Naive thymus-derived CD4-positive, alpha-beta T cell (primary cell): ENCODE measurements at regions of chr17 and their contacts with region 1.

Region 1: DNA sequence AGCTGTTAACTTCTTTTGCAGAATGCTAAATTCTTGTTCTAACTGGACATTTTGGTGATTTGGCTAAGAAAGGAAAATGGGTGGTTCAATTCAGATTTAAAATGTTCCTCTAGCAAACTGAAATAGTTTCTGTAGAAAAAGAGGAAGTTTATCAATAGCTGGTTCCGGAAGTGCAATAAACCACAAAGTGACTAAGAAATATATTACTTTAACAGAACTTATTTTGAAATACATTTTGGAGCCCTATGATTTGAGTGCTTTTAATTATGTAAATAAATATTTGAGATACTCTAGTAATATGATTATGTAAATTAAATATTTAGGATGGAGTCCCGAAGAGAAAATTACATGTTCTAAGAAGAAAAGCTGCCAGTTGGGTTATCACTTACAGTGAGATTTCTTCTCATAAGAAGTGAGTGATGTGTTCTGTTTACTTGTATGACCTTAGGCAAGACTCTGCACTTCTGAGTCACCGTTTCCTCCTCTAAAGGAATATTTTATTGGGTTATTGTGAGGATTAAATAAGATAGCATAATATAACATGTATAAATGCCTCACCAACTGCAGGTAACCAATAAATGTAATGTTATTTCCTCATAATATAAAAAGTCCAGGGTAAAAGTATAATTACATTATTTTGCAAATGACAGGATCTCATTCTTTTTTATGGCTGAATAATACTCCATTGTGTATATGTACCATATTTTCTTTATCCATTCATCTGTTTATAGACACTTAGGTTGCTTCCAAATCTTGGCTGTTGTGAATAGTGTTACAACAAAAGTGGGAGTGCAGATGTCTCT is at the start of gene EVI2B:
- DNase-seq: peak in 7 of 9 donors; percentile 51 to 73 (median 69)
- ATAC-seq: peak; percentile 46
- H3K4me3 ChIP-seq: peak within 1 kb of the TSS; percentile 63
- H3K4me3 Mint-ChIP-seq: peak within 1 kb of the TSS; percentile 85 to 98 (median 92)
- H3K27ac ChIP-seq: peak within 1 kb of the TSS; percentile 82
- H3K27ac Mint-ChIP-seq: peak within 1 kb of the TSS; percentile 84 to 98 (median 95)
- H3K4me1 ChIP-seq: peaks cover 27 to 41% of the 10 kb centered on the region in 2 donors
- H3K4me1 Mint-ChIP-seq: peaks cover 31 to 52% (median 44%) of the 10 kb centered on the region in 7 donors
- H3K27me3 ChIP-seq: no peaks in the 10 kb centered on the region
- H3K27me3 Mint-ChIP-seq: peaks cover 0 to 2% (median 0%) of the 10 kb centered on the region in 5 donors
- total RNA-seq, gene EVI2B: 57.8 to 154 (median 134) TPM

Region 2: GRCh38 chr17:30808785-30809286 is 505.3 kb before region 1 on chr17:
- CTCF ChIA-PET with region 1: no interaction called
- POLR2A ChIA-PET with region 1: interaction called, 4 read pairs
- intact Hi-C with region 1: loop called in 1 of 2 experiments (anchors 5 kb)
- DNase-seq: peak in 7 of 9 donors; percentile 69 to 89 (median 83)
- ATAC-seq: peak; percentile 95
- H3K4me3 ChIP-seq: peak overlapping the region; percentile 38
- H3K4me3 Mint-ChIP-seq: peak overlapping the region; percentile 84 to 94 (median 88)
- H3K27ac ChIP-seq: peak overlapping the region; percentile 81
- H3K27ac Mint-ChIP-seq: peak overlapping the region; percentile 96 to 99 (median 97)
- H3K4me1 ChIP-seq: peaks cover 41 to 63% of the 10 kb centered on the region in 2 donors
- H3K4me1 Mint-ChIP-seq: peaks cover 52 to 84% (median 72%) of the 10 kb centered on the region in 7 donors
- H3K27me3 ChIP-seq: no peaks in the 10 kb centered on the region
- H3K27me3 Mint-ChIP-seq: no peaks in the 10 kb centered on the region

Region 3: GRCh38 chr17:31269578-31269983 is 44.6 kb before region 1 on chr17:
- CTCF ChIA-PET with region 1: interaction called, 4 read pairs
- POLR2A ChIA-PET with region 1: interaction called, 7 read pairs
- intact Hi-C with region 1: loop called (anchors 1 to 5 kb)
- DNase-seq: no peak
- ATAC-seq: no peak
- H3K4me3 ChIP-seq: no peak overlapping the region
- H3K4me3 Mint-ChIP-seq: no peak overlapping the region
- H3K27ac ChIP-seq: no peak overlapping the region
- H3K27ac Mint-ChIP-seq: no peak overlapping the region
- H3K4me1 ChIP-seq: no peaks in the 10 kb centered on the region
- H3K4me1 Mint-ChIP-seq: peaks cover 0 to 9% (median 5%) of the 10 kb centered on the region in 7 donors
- H3K27me3 ChIP-seq: no peaks in the 10 kb centered on the region
- H3K27me3 Mint-ChIP-seq: no peaks in the 10 kb centered on the region

Region 4: GRCh38 chr17:31294820-31295488 is 19.2 kb before region 1 on chr17:
- CTCF ChIA-PET with region 1: interaction called, 3 read pairs
- POLR2A ChIA-PET with region 1: interaction called, 7 read pairs
- intact Hi-C with region 1: loop called in 1 of 2 experiments (anchors 2 kb)
- DNase-seq: no peak
- ATAC-seq: no peak
- H3K4me3 ChIP-seq: no peak overlapping the region
- H3K4me3 Mint-ChIP-seq: no peak overlapping the region
- H3K27ac ChIP-seq: no peak overlapping the region
- H3K27ac Mint-ChIP-seq: peak overlapping the region in 1 of 9 donors; percentile 7
- H3K4me1 ChIP-seq: no peaks in the 10 kb centered on the region
- H3K4me1 Mint-ChIP-seq: peaks cover 11 to 56% (median 30%) of the 10 kb centered on the region in 7 donors
- H3K27me3 ChIP-seq: no peaks in the 10 kb centered on the region
- H3K27me3 Mint-ChIP-seq: no peaks in the 10 kb centered on the region

Region 5: DNA sequence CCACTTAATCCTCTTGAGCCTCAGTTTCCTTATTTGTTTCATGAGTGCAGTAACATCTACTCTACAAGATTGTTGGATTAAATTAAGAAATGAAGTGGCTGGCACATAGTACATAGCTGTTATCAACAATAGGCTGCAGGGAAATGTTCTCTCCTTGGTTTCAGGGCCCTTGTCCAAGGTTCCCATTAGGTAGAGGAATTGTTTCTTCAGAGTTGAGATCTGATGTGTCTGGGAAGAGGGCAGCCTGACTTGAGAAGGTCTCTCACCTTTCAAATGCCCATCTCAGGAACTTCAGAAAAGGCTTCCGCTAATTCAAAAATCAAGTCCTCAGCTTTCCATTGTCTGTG is 164.9 kb after region 1 on chr17:
- CTCF ChIA-PET with region 1: no interaction called
- POLR2A ChIA-PET with region 1: no interaction called
- intact Hi-C with region 1: no loop called
- DNase-seq: no peak
- ATAC-seq: no peak
- H3K4me3 ChIP-seq: no peak overlapping the region
- H3K4me3 Mint-ChIP-seq: no peak overlapping the region
- H3K27ac ChIP-seq: no peak overlapping the region
- H3K27ac Mint-ChIP-seq: no peak overlapping the region
- H3K4me1 ChIP-seq: no peaks in the 10 kb centered on the region
- H3K4me1 Mint-ChIP-seq: peaks cover 0 to 1% (median 0%) of the 10 kb centered on the region in 7 donors
- H3K27me3 ChIP-seq: no peaks in the 10 kb centered on the region
- H3K27me3 Mint-ChIP-seq: peaks cover 0 to 9% (median 0%) of the 10 kb centered on the region in 5 donors

Region 6: GRCh38 chr17:31842183-31843069 is 528.2 kb after region 1 on chr17:
- CTCF ChIA-PET with region 1: no interaction called
- POLR2A ChIA-PET with region 1: no interaction called
- intact Hi-C with region 1: no loop called
- DNase-seq: peak; percentile 29 to 70 (median 59)
- ATAC-seq: peak; percentile 93
- H3K4me3 ChIP-seq: no peak overlapping the region
- H3K4me3 Mint-ChIP-seq: no peak overlapping the region
- H3K27ac ChIP-seq: no peak overlapping the region
- H3K27ac Mint-ChIP-seq: no peak overlapping the region
- H3K4me1 ChIP-seq: no peaks in the 10 kb centered on the region
- H3K4me1 Mint-ChIP-seq: no peaks in the 10 kb centered on the region
- H3K27me3 ChIP-seq: no peaks in the 10 kb centered on the region
- H3K27me3 Mint-ChIP-seq: peaks cover 0 to 19% (median 11%) of the 10 kb centered on the region in 5 donors